ENCODE measurements at regions of chr6 and their contacts with region 1.

Region 1: GRCh38 chr6:12572896-12573827 is 143.4 kb upstream of the PHACTR1 start:
- DNase-seq: peak; percentile 65 to 92
- H3K4me3 ChIP-seq: no peak overlapping the region; the same call in 1 of the 2 replicates
- H3K27ac ChIP-seq: peak overlapping the region; percentile 54
- H3K4me1 ChIP-seq: peaks cover 27% of the 10 kb centered on the region
- H3K27me3 ChIP-seq: no peaks in the 10 kb centered on the region
- CTCF ChIP-seq: no peak

Region 2: GRCh38 chr6:12585497-12586041 is 12.4 kb after region 1 on chr6:
- CTCF ChIA-PET with region 1: no interaction called
- POLR2A ChIA-PET with region 1: no interaction called
- intact Hi-C with region 1: loop called (anchors 2 kb)
- DNase-seq: no peak
- H3K4me3 ChIP-seq: no peak overlapping the region
- H3K27ac ChIP-seq: no peak overlapping the region
- H3K4me1 ChIP-seq: peaks cover 5% of the 10 kb centered on the region
- H3K27me3 ChIP-seq: no peaks in the 10 kb centered on the region
- CTCF ChIP-seq: no peak

Region 3: GRCh38 chr6:12941422-12941821 is 368.3 kb after region 1 on chr6:
- CTCF ChIA-PET with region 1: no interaction called
- POLR2A ChIA-PET with region 1: no interaction called
- intact Hi-C with region 1: no loop called
- DNase-seq: no peak
- H3K4me3 ChIP-seq: no peak overlapping the region
- H3K27ac ChIP-seq: no peak overlapping the region
- H3K4me1 ChIP-seq: no peaks in the 10 kb centered on the region
- H3K27me3 ChIP-seq: peaks cover 45% of the 10 kb centered on the region
- CTCF ChIP-seq: no peak

Measured in PC-9 (cell line).